Naive thymus-derived CD4-positive, alpha-beta T cell (primary cell): ENCODE measurements at regions of chr10 and their contacts with region 1.

Region 1: GRCh38 chr10:33008499-33009243 is 50.6 kb upstream of the ITGB1 start:
- DNase-seq: peak in 8 of 9 donors; percentile 25 to 65 (median 48)
- ATAC-seq: peak; percentile 50
- H3K4me3 ChIP-seq: peak overlapping the region; percentile 36
- H3K4me3 Mint-ChIP-seq: peak overlapping the region in 9 of 10 donors; percentile 56 to 79 (median 70)
- H3K27ac ChIP-seq: no peak overlapping the region
- H3K27ac Mint-ChIP-seq: peak overlapping the region in 5 of 9 donors; percentile 16 to 56 (median 26)
- H3K4me1 ChIP-seq: peaks cover 6 to 42% of the 10 kb centered on the region in 2 donors
- H3K4me1 Mint-ChIP-seq: peaks cover 17 to 39% (median 33%) of the 10 kb centered on the region in 7 donors
- H3K27me3 ChIP-seq: no peaks in the 10 kb centered on the region
- H3K27me3 Mint-ChIP-seq: peaks cover 0 to 9% (median 0%) of the 10 kb centered on the region in 5 donors

Region 2: DNA sequence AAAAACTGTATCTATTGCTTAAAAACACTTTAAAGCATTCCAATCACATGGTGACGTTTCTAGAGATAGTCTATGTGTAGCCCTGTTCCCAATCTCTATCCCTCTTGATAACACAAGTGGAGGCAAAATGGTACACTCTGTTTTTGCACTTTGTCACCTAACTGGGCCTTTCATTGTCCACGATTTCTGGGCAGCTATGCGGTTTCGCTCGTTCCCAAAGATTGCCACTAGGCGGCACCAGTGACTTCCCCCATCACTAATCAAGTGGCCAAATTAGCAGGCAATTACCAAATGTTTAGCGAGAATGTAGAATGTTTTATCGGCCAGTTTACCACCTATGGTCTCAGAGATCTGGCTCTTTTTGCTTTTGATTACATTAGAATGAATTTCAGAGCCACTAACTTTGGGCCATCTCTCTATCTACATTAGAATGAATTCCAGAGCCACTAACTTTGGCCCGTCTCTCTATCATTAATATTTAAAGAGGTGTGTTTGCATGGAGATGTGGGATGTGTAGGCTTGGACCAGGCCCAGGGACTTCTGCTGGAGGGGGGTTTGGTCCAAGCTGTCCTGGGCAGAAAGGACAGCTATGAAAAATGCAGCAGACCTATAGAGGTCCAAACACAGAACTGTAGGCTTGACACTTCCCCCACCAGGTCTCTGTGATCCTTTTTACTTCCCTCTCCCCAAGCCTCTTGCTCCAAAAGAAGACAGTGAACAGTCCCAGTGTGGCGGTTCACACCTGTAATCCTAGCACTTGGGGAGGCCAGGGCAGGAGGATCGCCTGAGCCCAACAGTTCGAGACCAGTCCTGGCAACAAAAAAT is 751.8 kb before region 1 on chr10:
- CTCF ChIA-PET with region 1: interaction called, 6 read pairs
- POLR2A ChIA-PET with region 1: no interaction called
- intact Hi-C with region 1: loop called in 1 of 2 experiments (anchors 1 kb)
- DNase-seq: peak; percentile 31 to 67 (median 57)
- ATAC-seq: peak; percentile 89
- H3K4me3 ChIP-seq: no peak overlapping the region
- H3K4me3 Mint-ChIP-seq: peak overlapping the region in 1 of 10 donors; percentile 60
- H3K27ac ChIP-seq: no peak overlapping the region
- H3K27ac Mint-ChIP-seq: peak overlapping the region in 1 of 9 donors; percentile 51
- H3K4me1 ChIP-seq: peaks cover 0 to 5% of the 10 kb centered on the region in 2 donors
- H3K4me1 Mint-ChIP-seq: peaks cover 1 to 13% (median 5%) of the 10 kb centered on the region in 7 donors
- H3K27me3 ChIP-seq: no peaks in the 10 kb centered on the region
- H3K27me3 Mint-ChIP-seq: no peaks in the 10 kb centered on the region

Region 3: GRCh38 chr10:32650246-32650655 is 358.4 kb before region 1 on chr10:
- CTCF ChIA-PET with region 1: no interaction called
- POLR2A ChIA-PET with region 1: no interaction called
- intact Hi-C with region 1: loop called in 1 of 2 experiments (anchors 1 kb)
- DNase-seq: peak in 3 of 9 donors; percentile 1 to 8 (median 4)
- ATAC-seq: peak; percentile 66
- H3K4me3 ChIP-seq: no peak overlapping the region
- H3K4me3 Mint-ChIP-seq: no peak overlapping the region
- H3K27ac ChIP-seq: no peak overlapping the region
- H3K27ac Mint-ChIP-seq: no peak overlapping the region
- H3K4me1 ChIP-seq: peaks cover 0 to 4% of the 10 kb centered on the region in 2 donors
- H3K4me1 Mint-ChIP-seq: peaks cover 4 to 13% (median 8%) of the 10 kb centered on the region in 7 donors
- H3K27me3 ChIP-seq: no peaks in the 10 kb centered on the region
- H3K27me3 Mint-ChIP-seq: no peaks in the 10 kb centered on the region

Region 4: DNA sequence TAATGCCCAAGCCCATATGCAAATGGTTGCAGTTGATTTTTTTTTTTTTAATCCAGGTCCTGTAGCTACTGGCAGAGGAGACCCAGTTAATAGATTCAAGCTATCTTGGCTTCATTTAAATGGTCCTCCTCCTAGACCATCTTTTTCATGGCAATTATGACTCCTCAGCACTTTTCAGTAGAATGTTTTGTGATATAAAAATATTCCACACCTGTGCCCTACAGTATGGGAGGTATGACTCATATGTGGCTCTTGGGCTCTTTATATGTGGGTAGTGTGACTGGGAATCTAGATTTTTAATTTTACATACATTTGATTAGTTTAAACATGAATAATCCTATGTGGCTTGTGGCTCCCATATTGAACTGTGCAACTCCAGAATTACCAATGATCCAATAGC is 130.8 kb before region 1 on chr10:
- CTCF ChIA-PET with region 1: no interaction called
- POLR2A ChIA-PET with region 1: no interaction called
- intact Hi-C with region 1: no loop called
- DNase-seq: no peak
- ATAC-seq: no peak
- H3K4me3 ChIP-seq: no peak overlapping the region
- H3K4me3 Mint-ChIP-seq: no peak overlapping the region
- H3K27ac ChIP-seq: no peak overlapping the region
- H3K27ac Mint-ChIP-seq: no peak overlapping the region
- H3K4me1 ChIP-seq: no peaks in the 10 kb centered on the region
- H3K4me1 Mint-ChIP-seq: no peaks in the 10 kb centered on the region
- H3K27me3 ChIP-seq: no peaks in the 10 kb centered on the region
- H3K27me3 Mint-ChIP-seq: no peaks in the 10 kb centered on the region

Region 5: DNA sequence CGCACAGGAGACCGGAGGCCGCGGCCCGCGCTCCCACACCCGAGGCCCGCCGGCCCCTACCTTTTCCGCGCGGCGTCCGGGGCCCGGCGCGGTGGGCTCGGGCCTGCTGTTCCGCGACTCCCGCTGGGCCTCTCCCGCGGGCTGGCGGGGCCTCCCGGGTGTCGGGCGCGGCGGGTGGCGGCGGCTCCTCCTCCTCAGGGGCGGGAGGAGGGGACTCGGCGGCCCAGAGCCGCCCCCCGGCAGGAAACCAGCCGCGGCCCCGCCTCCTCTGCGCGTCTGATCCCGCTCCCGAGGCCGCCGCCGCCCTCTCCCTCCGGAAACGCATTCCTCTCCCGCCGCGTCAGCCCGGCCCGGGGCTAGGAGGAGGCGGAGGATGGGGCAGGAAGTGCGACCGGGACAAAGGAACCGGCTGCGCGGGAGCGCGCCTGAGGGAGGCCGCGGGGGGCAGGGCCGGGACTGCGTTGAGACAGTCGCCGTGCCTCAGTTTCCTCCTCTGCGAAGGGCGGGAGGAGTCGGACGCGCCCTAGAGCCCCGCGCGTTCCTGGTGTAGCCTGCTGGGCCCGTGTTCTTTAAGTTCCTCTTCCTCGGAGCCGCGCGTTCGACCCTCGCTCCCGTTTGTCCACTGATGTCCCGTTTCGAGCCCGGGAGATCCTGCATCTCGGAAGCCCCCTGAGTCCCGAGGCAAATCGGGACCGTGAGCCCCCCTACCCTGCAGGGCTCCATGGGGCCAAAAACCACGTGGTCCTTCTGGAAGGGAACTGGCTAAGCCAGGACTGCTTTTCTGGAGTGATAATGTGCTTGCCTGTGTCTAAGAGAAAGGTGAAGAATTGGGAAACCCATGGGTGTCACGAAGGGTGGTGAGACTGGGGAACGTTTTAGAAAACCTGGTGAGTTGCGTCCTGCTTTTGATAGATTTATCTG is 50.3 kb before region 1 on chr10 and contains the start of gene ITGB1:
- CTCF ChIA-PET with region 1: interaction called, 10 read pairs
- POLR2A ChIA-PET with region 1: no interaction called
- intact Hi-C with region 1: loop called in 1 of 2 experiments (anchors 1 kb)
- DNase-seq: peak; percentile 73 to 91 (median 82)
- ATAC-seq: peak; percentile 95
- H3K4me3 ChIP-seq: peak within 1 kb of the TSS; percentile 88
- H3K4me3 Mint-ChIP-seq: peak within 1 kb of the TSS; percentile 78 to 95 (median 88)
- H3K27ac ChIP-seq: peak within 1 kb of the TSS; percentile 68
- H3K27ac Mint-ChIP-seq: peak within 1 kb of the TSS; percentile 74 to 90 (median 82)
- H3K4me1 ChIP-seq: peaks cover 7 to 8% of the 10 kb centered on the region in 2 donors
- H3K4me1 Mint-ChIP-seq: peaks cover 29 to 60% (median 54%) of the 10 kb centered on the region in 7 donors
- H3K27me3 ChIP-seq: no peaks in the 10 kb centered on the region
- H3K27me3 Mint-ChIP-seq: peaks cover 0 to 13% (median 0%) of the 10 kb centered on the region in 5 donors
- total RNA-seq, gene ITGB1: 43.2 to 205 (median 60.8) TPM

Region 6: DNA sequence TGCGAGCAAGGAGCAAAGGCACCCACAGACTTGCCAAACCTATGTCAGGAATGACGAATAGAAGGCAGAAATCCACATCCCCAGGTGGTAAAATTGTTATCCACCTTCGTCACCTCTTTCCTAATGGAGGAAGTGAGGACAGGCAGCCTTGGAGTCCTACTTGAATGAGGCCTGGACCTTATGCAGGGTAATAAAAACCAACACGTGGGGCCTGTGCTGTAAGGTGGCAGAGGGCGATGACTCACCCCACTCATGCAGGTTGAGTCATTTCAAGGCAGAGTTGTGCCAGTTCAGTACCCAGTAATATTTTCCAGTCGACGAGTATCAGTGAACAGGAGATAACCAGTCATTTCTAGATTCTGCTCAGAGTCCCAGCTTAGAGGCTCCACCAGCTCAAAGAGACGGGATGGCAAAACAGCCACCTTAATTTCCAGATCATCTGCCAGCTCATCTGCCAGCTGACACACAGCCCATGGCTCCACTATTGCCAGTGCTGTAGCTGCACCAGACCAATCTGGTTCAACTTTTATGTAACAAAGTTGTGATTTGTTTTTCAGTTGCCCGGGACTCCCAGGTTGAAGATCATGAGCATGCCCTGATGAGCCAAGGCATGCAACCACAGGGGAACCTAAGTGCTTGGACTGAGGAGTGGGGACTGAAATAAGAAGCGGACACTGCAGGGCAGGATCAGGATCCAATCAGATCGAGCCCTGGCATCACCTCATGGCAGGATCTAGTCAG is 125.5 kb after region 1 on chr10:
- CTCF ChIA-PET with region 1: interaction called, 4 read pairs
- POLR2A ChIA-PET with region 1: no interaction called
- intact Hi-C with region 1: loop called in 1 of 2 experiments (anchors 1 kb)
- DNase-seq: peak in 2 of 9 donors; percentile 61 to 64
- ATAC-seq: peak; percentile 58
- H3K4me3 ChIP-seq: no peak overlapping the region
- H3K4me3 Mint-ChIP-seq: peak overlapping the region in 2 of 10 donors; percentile 27 to 50
- H3K27ac ChIP-seq: no peak overlapping the region
- H3K27ac Mint-ChIP-seq: peak overlapping the region in 8 of 9 donors; percentile 54 to 95 (median 82)
- H3K4me1 ChIP-seq: peaks cover 35 to 85% of the 10 kb centered on the region in 2 donors
- H3K4me1 Mint-ChIP-seq: peaks cover 25 to 78% (median 57%) of the 10 kb centered on the region in 7 donors
- H3K27me3 ChIP-seq: no peaks in the 10 kb centered on the region
- H3K27me3 Mint-ChIP-seq: no peaks in the 10 kb centered on the region